ENCODE measurements at regions of chr3 and their contacts with region 1.

Region 1: DNA sequence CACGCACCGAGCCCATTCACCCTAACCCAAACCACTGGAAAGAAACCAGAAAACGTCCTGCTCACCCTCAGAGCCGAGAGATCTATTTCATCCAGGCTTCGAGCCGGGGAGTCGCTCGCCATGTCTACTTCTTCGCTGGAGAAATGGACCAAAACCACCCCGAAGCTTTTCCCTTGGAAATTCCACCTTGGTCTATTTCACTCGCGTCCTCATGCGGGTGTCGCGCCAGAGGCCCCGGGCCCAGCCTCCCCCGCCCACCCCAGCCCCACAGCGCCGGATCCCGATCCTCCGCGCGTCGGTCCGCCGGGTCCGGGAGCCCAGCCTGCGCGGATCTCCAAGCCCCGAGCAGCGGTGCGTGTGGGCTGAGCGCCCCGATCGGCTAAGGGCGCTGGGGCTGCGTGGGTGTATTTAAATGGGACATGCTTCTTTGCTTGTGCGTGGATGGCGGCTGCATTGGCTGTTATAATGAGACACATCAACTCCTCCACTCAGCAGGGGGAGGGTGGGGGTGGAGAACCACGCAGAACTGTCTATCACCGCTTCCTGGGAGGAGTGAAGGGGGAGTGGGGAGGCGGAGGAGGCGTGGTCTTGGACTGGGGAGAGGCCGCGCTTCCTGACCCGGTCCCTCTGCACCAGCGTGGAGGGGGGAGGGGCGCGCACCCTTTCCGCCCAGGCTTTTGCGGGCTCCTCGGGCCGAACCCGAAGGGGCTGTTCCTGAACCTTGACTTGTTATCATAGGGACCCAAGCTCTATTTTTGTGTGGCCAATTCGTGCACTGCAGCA is at the start of gene TNIK:
- DNase-seq: peak; percentile 66
- ATAC-seq: peak; percentile 90
- H3K4me3 Mint-ChIP-seq: peak within 1 kb of the TSS; percentile 93
- H3K27ac Mint-ChIP-seq: peak within 1 kb of the TSS; percentile 77
- H3K4me1 Mint-ChIP-seq: peaks cover 39% of the 10 kb centered on the region
- H3K27me3 Mint-ChIP-seq: peaks cover 9% of the 10 kb centered on the region
- CTCF ChIP-seq: no peak
- total RNA-seq, gene TNIK: 2.0 and 2.5 TPM in 2 replicates

Region 2: DNA sequence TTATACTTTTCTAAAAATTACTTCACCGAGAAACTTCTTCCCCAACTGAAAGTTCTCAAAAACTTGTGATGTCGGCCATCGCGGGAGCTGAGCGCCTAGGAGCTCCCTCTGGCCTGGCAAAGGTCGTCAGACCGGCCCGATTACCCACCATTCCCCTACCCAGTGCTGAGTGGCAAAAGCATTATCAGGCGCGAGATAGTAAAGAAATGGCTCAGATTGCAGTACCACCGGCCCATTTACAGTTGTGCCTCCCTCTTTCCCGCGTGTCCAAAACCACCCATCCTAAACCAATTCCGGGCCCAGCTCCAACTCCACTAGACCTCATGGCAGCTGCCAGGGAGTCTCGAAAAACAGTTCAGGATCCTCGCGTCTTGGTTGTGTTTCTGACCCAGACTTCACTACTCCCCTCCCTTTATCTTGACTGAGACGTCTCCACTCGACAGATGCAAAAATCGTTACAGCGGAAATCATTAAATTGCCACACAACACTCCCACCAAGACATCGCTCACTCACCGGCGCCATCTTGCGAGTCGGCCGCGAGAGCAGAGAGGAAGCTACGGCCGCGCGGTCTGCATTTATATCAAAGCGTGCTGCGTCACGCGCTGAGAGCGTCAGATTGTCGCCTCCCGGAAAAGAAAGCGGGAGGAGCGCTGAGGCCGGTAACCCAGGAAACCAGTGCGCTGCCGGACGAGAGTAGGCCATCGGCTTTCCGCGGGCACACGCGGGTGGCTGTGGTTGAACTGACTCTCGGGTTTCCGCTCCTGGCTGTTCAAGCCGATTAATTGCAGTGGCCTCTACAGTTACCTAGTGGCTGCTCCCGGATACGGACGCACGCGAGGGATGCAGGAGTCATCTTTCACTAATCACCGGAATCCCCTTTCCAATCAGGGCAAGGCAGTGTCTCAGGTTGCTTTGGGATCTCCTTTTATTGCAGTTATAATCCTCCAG is 590.2 kb before region 1 on chr3 and contains the start of gene RPL22L1:
- CTCF ChIA-PET with region 1: no interaction called
- POLR2A ChIA-PET with region 1: interaction called, 3 read pairs
- intact Hi-C with region 1: loop called (anchors 2 kb)
- DNase-seq: peak; percentile 89
- ATAC-seq: peak; percentile 86
- H3K4me3 Mint-ChIP-seq: peak within 1 kb of the TSS; percentile 95
- H3K27ac Mint-ChIP-seq: peak within 1 kb of the TSS; percentile 97
- H3K4me1 Mint-ChIP-seq: peaks cover 34% of the 10 kb centered on the region
- H3K27me3 Mint-ChIP-seq: no peaks in the 10 kb centered on the region
- CTCF ChIP-seq: no peak
- total RNA-seq, gene RPL22L1: 109 and 124 TPM in 2 replicates

Region 3: DNA sequence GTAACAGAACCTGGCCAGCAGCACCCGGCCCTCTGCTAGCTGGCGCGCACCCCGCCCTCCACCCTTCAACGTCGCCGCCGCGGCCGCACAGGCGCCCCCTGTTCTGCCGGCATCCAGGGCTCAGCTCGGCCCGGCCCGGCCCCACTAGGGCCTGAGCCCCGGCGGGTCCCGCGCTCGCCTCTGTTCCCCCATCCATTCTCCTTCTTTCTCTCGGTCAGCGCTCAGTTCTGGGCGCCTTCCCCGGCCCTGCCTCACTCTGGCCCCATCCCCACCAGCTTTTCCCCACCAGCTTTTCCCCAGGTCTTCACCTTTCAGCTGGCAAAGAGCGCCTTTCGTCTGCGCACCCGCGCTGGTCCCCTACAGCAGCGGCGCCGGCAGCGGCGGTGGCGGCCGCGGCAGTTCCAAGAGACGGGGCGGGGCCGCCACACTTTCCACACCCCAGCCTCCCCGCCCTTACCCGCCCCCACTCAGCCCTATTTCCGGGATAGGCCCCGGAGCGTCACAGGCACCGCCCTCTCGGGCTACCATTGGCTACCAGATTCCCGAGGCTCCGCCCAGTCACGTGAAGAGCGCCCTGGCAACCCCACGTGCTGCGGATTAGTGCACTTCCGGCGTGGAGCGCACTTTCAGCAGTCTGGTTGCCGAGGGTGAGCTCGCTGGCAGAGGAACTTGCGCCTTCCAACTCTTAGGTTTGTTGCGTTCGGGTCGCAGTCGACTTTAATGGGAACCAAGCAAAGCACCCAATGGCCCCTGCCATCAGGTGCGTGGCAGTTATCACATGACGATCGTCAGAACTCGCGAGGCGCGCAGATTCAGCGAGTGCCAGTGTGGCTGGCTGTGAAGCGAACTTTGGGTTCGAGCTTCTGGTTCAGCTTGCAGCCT is 551.7 kb before region 1 on chr3 and contains the start of gene EIF5A2:
- CTCF ChIA-PET with region 1: no interaction called
- POLR2A ChIA-PET with region 1: no interaction called
- intact Hi-C with region 1: loop called (anchors 10 kb)
- DNase-seq: peak; percentile 77
- ATAC-seq: peak; percentile 95
- H3K4me3 Mint-ChIP-seq: peak within 1 kb of the TSS; percentile 94
- H3K27ac Mint-ChIP-seq: peak within 1 kb of the TSS; percentile 86
- H3K4me1 Mint-ChIP-seq: peaks cover 18% of the 10 kb centered on the region
- H3K27me3 Mint-ChIP-seq: no peaks in the 10 kb centered on the region
- CTCF ChIP-seq: no peak
- total RNA-seq, gene EIF5A2: 6.1 and 6.9 TPM in 2 replicates

Region 4: DNA sequence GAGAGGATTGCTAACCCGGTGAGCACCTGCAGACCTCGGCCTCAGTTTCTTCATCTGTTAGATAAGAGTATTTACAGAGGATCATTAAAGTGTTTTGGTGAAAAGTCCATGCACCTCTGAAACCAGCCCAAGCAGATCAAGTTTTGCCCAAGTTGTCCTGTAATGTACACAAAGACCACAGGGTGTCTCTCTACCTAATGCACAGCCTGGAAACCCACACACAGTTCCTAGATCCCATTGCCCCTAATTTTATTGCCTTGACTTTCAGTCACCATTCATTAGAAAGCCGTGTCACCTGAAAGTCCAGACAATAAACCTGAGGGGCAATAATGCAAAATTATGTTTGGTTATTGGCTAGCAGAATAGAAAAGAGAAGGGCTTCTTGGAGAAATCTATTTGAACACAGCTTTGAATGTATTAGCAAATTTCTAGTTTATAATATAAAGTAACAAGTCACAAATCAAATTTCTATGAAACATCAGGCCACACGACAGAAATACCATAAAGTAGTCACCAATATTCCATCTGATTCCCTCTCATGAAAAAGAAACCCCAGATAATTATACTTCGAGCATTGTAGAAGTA is 272.3 kb before region 1 on chr3:
- CTCF ChIA-PET with region 1: interaction called, 3 read pairs
- POLR2A ChIA-PET with region 1: no interaction called
- intact Hi-C with region 1: loop called (anchors 5 kb)
- DNase-seq: no peak
- ATAC-seq: no peak
- H3K4me3 Mint-ChIP-seq: no peak overlapping the region
- H3K27ac Mint-ChIP-seq: no peak overlapping the region
- H3K4me1 Mint-ChIP-seq: no peaks in the 10 kb centered on the region
- H3K27me3 Mint-ChIP-seq: no peaks in the 10 kb centered on the region
- CTCF ChIP-seq: no peak

Region 5: GRCh38 chr3:171257251-171258203 is 202.6 kb before region 1 on chr3:
- CTCF ChIA-PET with region 1: no interaction called
- POLR2A ChIA-PET with region 1: no interaction called
- intact Hi-C with region 1: loop called (anchors 10 kb)
- DNase-seq: no peak
- ATAC-seq: no peak
- H3K4me3 Mint-ChIP-seq: no peak overlapping the region
- H3K27ac Mint-ChIP-seq: no peak overlapping the region
- H3K4me1 Mint-ChIP-seq: peaks cover 29% of the 10 kb centered on the region
- H3K27me3 Mint-ChIP-seq: no peaks in the 10 kb centered on the region
- CTCF ChIP-seq: no peak

Region 6: GRCh38 chr3:171491361-171491760 is 31.2 kb after region 1 on chr3:
- CTCF ChIA-PET with region 1: no interaction called
- POLR2A ChIA-PET with region 1: no interaction called
- intact Hi-C with region 1: no loop called
- DNase-seq: no peak
- ATAC-seq: no peak
- H3K4me3 Mint-ChIP-seq: peak overlapping the region; percentile 33
- H3K27ac Mint-ChIP-seq: no peak overlapping the region
- H3K4me1 Mint-ChIP-seq: peaks cover 5% of the 10 kb centered on the region
- H3K27me3 Mint-ChIP-seq: no peaks in the 10 kb centered on the region
- CTCF ChIP-seq: no peak